ENCODE measurements at regions of chr4 and their contacts with region 1.

Region 1: GRCh38 chr4:189660722-189661360 is 279.8 kb upstream of the FRG1 start:
- DNase-seq: no peak
- H3K4me3 ChIP-seq: no peak overlapping the region
- CTCF ChIP-seq: no peak
- POLR2A ChIP-seq: no peak

Region 2: DNA sequence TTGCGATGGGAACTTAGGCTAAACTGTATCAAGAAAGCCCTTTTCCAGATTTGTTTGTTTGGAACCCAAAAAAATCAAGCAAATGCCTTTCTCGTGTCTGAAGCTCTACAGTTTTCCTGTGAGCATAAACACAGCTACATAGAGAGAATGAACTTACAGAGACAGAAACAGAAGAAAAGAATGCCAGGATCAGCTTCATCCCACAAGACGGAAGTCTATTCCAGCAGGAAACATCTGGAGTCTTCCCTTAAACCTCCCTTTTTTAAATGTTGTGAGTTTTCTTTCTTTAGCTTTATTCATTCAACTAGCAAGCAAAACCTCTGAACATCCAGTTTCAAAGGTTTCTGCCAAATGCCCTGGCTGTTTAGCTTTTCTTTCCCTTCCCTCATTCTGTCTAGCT is 1697.9 kb before region 1 on chr4:
- intact Hi-C with region 1: loop called (anchors 10 kb)
- DNase-seq: no peak
- H3K4me3 ChIP-seq: no peak overlapping the region
- CTCF ChIP-seq: no peak
- POLR2A ChIP-seq: no peak

Region 3: GRCh38 chr4:188612659-188613058 is 1048.2 kb before region 1 on chr4:
- intact Hi-C with region 1: no loop called
- DNase-seq: no peak
- H3K4me3 ChIP-seq: no peak overlapping the region
- CTCF ChIP-seq: no peak
- POLR2A ChIP-seq: no peak

Region 4: GRCh38 chr4:189021831-189022230 is 639.0 kb before region 1 on chr4:
- intact Hi-C with region 1: no loop called
- DNase-seq: no peak
- H3K4me3 ChIP-seq: no peak overlapping the region
- CTCF ChIP-seq: no peak
- POLR2A ChIP-seq: no peak

Region 5: GRCh38 chr4:189445613-189446012 is 215.2 kb before region 1 on chr4:
- intact Hi-C with region 1: no loop called
- DNase-seq: no peak
- H3K4me3 ChIP-seq: no peak overlapping the region
- CTCF ChIP-seq: no peak
- POLR2A ChIP-seq: no peak

Region 6: GRCh38 chr4:189897667-189898066 is 236.8 kb after region 1 on chr4:
- intact Hi-C with region 1: no loop called
- DNase-seq: no peak
- H3K4me3 ChIP-seq: no peak overlapping the region
- CTCF ChIP-seq: no peak
- POLR2A ChIP-seq: no peak

Measured in lower leg skin (tissue), 4 donors.